ENCODE measurements at regions of chr14 and their contacts with region 1.

Region 1: GRCh38 chr14:60331201-60332045 is 82.4 kb downstream of the PPM1A start:
- DNase-seq: no peak
- H3K4me3 ChIP-seq: peak overlapping the region; percentile 14 to 19 (median 18)
- H3K27ac ChIP-seq: no peak overlapping the region
- H3K4me1 ChIP-seq: peaks cover 8% of the 10 kb centered on the region
- H3K27me3 ChIP-seq: peaks cover 9% of the 10 kb centered on the region
- CTCF ChIP-seq: peak; percentile 73 to 76

Region 2: GRCh38 chr14:60254176-60254575 is 77.2 kb before region 1 on chr14:
- CTCF ChIA-PET with region 1: no interaction called
- dilution Hi-C with region 1: no loop called
- in situ Hi-C with region 1: no loop called
- intact Hi-C with region 1: no loop called
- DNase-seq: no peak
- H3K4me3 ChIP-seq: no peak overlapping the region
- H3K27ac ChIP-seq: no peak overlapping the region
- H3K4me1 ChIP-seq: peaks cover 17% of the 10 kb centered on the region
- H3K27me3 ChIP-seq: no peaks in the 10 kb centered on the region
- CTCF ChIP-seq: no peak

Region 3: DNA sequence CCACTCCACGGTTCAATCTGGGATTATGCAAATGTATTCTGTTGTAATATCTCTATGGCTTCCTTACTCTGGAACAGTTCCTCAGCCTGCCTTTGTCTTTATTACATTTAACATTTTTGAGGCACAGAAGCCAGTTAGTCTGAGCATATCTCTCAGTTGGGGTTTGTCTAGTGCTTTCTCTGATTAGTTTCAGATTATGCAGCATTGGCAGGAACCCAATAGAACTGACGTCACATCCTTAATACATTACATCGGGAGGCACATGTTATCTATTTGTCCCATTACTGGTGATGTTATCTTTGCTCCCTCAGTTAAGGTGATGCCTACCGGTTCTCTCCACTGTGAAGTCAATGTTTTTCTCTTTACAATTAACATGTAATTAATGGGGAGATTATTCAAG is 20.0 kb before region 1 on chr14:
- CTCF ChIA-PET with region 1: no interaction called
- dilution Hi-C with region 1: no loop called
- in situ Hi-C with region 1: no loop called
- intact Hi-C with region 1: no loop called
- DNase-seq: peak; percentile 11
- H3K4me3 ChIP-seq: no peak overlapping the region
- H3K27ac ChIP-seq: no peak overlapping the region
- H3K4me1 ChIP-seq: no peaks in the 10 kb centered on the region
- H3K27me3 ChIP-seq: no peaks in the 10 kb centered on the region
- CTCF ChIP-seq: no peak

Region 4: DNA sequence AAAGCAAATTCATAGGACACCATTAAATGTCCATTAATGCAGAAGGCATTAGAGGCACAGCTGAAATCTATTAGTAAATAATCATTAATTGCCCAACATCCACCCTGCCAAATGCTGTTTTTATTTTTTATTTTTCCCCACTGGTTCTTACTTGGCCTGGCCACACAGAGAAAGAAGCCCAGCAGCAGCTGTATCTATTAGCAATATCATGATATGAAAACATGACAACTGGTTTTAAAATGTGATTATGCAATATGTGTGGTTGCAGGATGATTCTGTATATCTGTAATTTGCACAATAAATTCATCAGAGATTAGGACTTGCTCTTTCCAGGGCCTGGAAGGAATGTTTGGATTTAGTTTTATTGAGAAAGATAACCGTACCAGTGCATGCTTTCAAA is 222.4 kb after region 1 on chr14:
- CTCF ChIA-PET with region 1: no interaction called
- dilution Hi-C with region 1: no loop called
- in situ Hi-C with region 1: loop called in 1 of 2 experiments (anchors 10 kb)
- intact Hi-C with region 1: no loop called
- DNase-seq: peak; percentile 4
- H3K4me3 ChIP-seq: no peak overlapping the region
- H3K27ac ChIP-seq: no peak overlapping the region
- H3K4me1 ChIP-seq: no peaks in the 10 kb centered on the region
- H3K27me3 ChIP-seq: no peaks in the 10 kb centered on the region
- CTCF ChIP-seq: no peak

Measured in mammary epithelial cell (primary cell).